ENCODE measurements at regions of chr10 and their contacts with region 1.

Region 1: GRCh38 chr10:47311932-47312662 is 10.2 kb upstream of the GDF2 start:
- DNase-seq: peak; percentile 77
- ATAC-seq: peak; percentile 63
- H3K4me3 ChIP-seq: no peak overlapping the region
- H3K4me3 Mint-ChIP-seq: no peak overlapping the region
- H3K27ac ChIP-seq: no peak overlapping the region
- H3K27ac Mint-ChIP-seq: no peak overlapping the region
- H3K4me1 ChIP-seq: no peaks in the 10 kb centered on the region
- H3K4me1 Mint-ChIP-seq: no peaks in the 10 kb centered on the region
- H3K27me3 ChIP-seq: no peaks in the 10 kb centered on the region
- H3K27me3 Mint-ChIP-seq: no peaks in the 10 kb centered on the region
- CTCF ChIP-seq: peak; percentile 89

Region 2: GRCh38 chr10:47024399-47025252 is 287.5 kb before region 1 on chr10:
- CTCF ChIA-PET with region 1: interaction called, 83 read pairs
- POLR2A ChIA-PET with region 1: no interaction called
- intact Hi-C with region 1: loop called (anchors 1 kb)
- DNase-seq: peak; percentile 72
- ATAC-seq: peak; percentile 58
- H3K4me3 ChIP-seq: no peak overlapping the region
- H3K4me3 Mint-ChIP-seq: no peak overlapping the region
- H3K27ac ChIP-seq: no peak overlapping the region
- H3K27ac Mint-ChIP-seq: no peak overlapping the region
- H3K4me1 ChIP-seq: no peaks in the 10 kb centered on the region
- H3K4me1 Mint-ChIP-seq: no peaks in the 10 kb centered on the region
- H3K27me3 ChIP-seq: no peaks in the 10 kb centered on the region
- H3K27me3 Mint-ChIP-seq: peaks cover 5% of the 10 kb centered on the region
- CTCF ChIP-seq: peak; percentile 83

Region 3: DNA sequence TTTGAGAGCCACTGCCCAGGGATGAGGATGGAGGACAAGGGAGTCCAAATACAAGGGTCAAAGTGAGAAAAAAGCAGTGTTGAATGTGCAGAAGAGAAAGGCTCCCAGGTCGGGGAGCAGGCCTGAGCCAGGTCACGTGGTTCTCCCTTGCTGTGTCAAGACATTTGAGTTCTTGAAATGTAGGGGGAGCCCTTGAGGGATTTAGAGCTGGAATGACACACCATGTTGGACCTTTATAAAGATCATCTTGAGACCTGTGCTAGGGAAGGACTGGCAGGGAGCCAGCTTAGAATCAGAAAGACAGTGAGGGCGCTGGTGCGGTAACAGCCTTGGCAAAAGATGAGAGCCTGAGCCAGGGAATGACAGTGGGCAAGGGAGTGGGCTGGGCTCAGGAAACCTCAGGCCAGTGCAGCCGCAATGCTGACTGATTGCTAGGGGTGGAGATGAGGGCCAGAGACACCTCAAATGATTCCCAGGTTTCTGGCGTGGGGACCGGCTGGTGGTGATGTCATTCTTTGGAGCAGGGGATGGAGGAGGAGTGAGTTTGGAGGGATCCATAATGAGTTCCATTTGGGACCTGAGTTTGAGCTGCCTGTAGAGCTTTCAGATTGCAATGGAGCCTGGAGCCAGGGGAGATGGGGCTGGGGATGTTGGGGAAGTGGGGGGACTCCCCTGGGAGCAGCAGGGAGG is 280.7 kb before region 1 on chr10:
- CTCF ChIA-PET with region 1: interaction called, 83 read pairs
- POLR2A ChIA-PET with region 1: no interaction called
- intact Hi-C with region 1: no loop called
- DNase-seq: no peak
- ATAC-seq: no peak
- H3K4me3 ChIP-seq: no peak overlapping the region
- H3K4me3 Mint-ChIP-seq: no peak overlapping the region
- H3K27ac ChIP-seq: no peak overlapping the region
- H3K27ac Mint-ChIP-seq: no peak overlapping the region
- H3K4me1 ChIP-seq: no peaks in the 10 kb centered on the region
- H3K4me1 Mint-ChIP-seq: no peaks in the 10 kb centered on the region
- H3K27me3 ChIP-seq: no peaks in the 10 kb centered on the region
- H3K27me3 Mint-ChIP-seq: peaks cover 5% of the 10 kb centered on the region
- CTCF ChIP-seq: no peak

Measured in B cell (primary cell).